PC-9 (cell line): ENCODE measurements at regions of chr6 and their contacts with region 1.

Region 1: GRCh38 chr6:83722876-83723275 is 14.0 kb upstream of the SNAP91 start:
- DNase-seq: no peak
- H3K4me3 ChIP-seq: no peak overlapping the region
- H3K27ac ChIP-seq: no peak overlapping the region
- H3K4me1 ChIP-seq: no peaks in the 10 kb centered on the region
- H3K27me3 ChIP-seq: no peaks in the 10 kb centered on the region
- CTCF ChIP-seq: no peak

Region 2: GRCh38 chr6:84227434-84228197 is 504.7 kb after region 1 on chr6 and contains the start of gene CEP162:
- CTCF ChIA-PET with region 1: no interaction called
- POLR2A ChIA-PET with region 1: interaction called, 10 read pairs
- intact Hi-C with region 1: no loop called
- DNase-seq: peak; percentile 68 to 78
- H3K4me3 ChIP-seq: peak within 1 kb of the TSS; percentile 95
- H3K27ac ChIP-seq: no peak within 1 kb of the TSS
- H3K4me1 ChIP-seq: peaks cover 6% of the 10 kb centered on the region; the same call in 1 of the 2 replicates
- H3K27me3 ChIP-seq: peaks cover 3% of the 10 kb centered on the region; the same call in 1 of the 2 replicates
- CTCF ChIP-seq: peak; percentile 71
- total RNA-seq, gene CEP162: 5.8 and 6.0 TPM in 2 replicates